ENCODE measurements at regions of chr11 and their contacts with region 1.

Region 1: GRCh38 chr11:101241160-101241795 is 111.7 kb upstream of the PGR start:
- DNase-seq: no peak
- ATAC-seq: no peak

Region 2: GRCh38 chr11:100902454-100903141 is 338.7 kb before region 1 on chr11:
- intact Hi-C with region 1: no loop called
- DNase-seq: no peak
- ATAC-seq: peak; percentile 30

Region 3: DNA sequence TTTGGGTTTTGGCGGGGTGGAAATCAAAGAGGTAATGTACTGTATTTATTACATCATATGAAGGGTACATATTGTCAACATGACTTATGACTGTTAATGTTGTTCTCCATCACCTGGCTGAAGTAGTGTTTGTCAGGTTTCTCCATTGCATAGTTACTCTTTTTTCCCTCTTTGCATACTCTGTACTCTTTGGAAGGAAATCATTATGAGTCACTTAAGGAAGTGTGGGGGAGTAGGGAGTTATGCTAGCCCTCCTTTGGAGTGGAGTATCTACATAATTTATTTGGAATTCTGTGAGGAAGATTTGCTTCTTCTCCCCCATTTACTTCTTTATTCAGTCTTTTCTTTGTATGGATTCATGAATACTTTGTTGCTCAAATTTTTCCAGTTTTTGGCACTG is 108.1 kb before region 1 on chr11:
- intact Hi-C with region 1: loop called (anchors 1 kb)
- DNase-seq: no peak
- ATAC-seq: no peak

Region 4: DNA sequence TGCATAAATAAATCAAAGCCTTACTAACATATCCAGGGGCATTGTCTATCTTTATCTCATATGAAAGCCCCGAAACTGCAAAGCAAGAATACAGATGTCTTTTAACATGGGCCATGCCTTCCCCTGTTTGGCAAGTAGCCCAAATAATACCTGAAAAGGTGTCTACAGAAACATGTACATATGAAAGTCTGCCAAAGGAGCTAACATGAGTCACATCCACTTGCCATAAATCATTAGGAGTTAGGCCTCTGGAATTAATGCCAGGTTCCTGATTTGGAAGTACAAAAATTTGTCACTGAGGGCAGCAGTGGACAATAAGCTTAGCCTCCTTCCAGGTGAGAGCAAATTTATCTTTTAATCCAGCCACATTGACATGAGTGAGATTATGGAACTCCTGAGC is 26.2 kb before region 1 on chr11:
- intact Hi-C with region 1: no loop called
- DNase-seq: no peak
- ATAC-seq: no peak